H1 (cell line): ENCODE measurements at regions of chr16 and their contacts with region 1.

Region 1: DNA sequence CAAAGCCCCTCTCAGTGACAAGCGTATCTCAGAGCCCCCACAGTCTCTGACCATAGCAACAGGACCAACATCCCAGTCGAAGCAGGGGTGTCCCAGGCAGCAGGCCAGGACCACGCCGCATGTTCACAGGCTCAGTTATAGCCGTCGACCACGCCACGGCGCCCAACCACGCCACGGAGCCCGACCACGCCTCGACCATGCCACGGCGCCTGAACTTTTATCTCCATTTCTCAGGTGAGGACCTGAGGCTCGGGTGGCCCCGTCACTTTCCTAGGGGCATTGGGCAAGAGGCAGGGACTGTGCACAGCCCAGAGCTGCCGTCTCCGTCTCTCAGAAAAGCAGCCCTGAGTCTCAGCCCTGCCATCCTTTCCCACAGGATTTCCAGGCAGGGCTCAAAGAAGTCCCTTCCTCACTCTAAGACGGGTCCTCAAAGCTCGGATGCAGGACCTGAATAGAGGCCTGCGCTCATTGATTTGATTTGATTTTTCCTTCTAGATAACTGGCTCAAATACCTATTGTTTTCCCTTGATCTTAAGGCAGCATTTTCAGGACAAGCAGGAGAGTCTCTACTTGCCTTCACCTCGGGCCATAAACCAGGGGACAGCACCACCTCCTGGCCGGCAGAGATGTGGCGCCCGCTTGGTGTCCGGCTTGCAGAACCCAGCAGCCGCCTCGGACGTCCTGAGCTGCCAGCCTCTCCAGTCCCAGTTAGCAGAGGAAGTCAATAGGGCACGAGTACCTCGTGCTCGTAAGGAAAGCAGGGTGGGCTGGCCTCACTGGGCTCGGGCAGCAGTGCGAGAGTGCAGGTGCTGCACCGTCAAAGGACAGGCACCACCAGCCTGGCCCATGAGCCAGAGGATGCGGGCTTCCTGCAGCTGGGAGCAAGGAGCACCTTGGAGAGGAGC is 38.7 kb downstream of the C16orf95 start:
- DNase-seq: peak; percentile 77 to 90
- H3K4me3 ChIP-seq: no peak overlapping the region
- H3K27ac ChIP-seq: no peak overlapping the region
- H3K4me1 ChIP-seq: no peaks in the 10 kb centered on the region
- H3K27me3 ChIP-seq: no peaks in the 10 kb centered on the region; a peak in 1 of 7 replicates
- CTCF ChIP-seq: peak; percentile 89 to 97 (median 97)
- EP300 ChIP-seq: no peak
- POLR2A ChIP-seq: no peak
- RAD21 ChIP-seq: peak; percentile 95 to 97

Region 2: DNA sequence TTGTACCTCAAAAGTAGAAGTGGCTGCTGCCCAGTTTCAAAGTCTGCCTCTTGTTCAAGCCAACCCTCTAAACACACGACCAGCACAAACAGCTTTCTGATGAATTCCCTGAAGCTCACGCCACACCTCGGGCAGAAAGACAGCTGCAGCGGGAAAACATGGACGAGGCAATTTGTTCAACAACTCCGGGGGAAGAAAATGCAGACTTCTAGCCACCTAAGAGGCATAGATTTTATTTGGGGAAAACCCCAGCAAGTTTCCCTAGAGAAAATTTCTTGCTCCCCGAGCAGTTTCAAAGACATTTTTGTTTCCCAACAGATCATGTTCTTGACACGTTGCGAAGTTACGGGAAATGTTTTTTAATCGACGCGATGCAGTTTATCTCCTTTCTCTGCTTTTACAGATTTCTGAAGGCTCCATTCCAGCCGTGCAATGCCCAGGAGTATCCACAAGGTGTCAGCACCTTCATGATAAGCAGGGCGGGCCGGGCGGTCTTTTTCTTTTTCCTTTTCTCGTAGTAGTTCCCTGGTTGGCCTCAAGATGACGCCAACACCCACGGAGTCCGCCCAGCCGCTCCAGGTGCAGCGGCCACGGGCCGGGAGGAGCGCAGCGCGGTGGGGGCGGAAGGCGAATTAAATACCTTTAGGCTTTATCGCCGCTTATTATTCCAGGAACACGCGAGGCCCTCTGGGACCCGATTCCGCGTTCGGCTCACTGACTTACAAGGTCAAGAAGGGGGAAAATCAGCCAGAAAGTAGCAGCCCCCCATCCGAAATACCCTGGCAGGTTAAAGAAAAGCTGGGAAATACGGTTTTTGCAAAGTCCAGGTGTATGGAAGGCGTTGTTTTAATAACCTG is 714.7 kb before region 1 on chr16:
- CTCF ChIA-PET with region 1: interaction called, 10 read pairs
- POLR2A ChIA-PET with region 1: no interaction called
- DNase-seq: peak in 1 of 2 experiments; percentile 95
- H3K4me3 ChIP-seq: peak overlapping the region in 3 of 4 experiments; percentile 34 to 53 (median 43); a peak in 6 of 8 replicates
- H3K27ac ChIP-seq: no peak overlapping the region
- H3K4me1 ChIP-seq: peaks cover 3 to 16% (median 8%) of the 10 kb centered on the region in 4 experiments
- H3K27me3 ChIP-seq: peaks cover 39 to 56% (median 49%) of the 10 kb centered on the region in 4 experiments; a peak in 6 of 7 replicates
- CTCF ChIP-seq: peak; percentile 82 to 99 (median 97)
- EP300 ChIP-seq: no peak
- POLR2A ChIP-seq: no peak
- RAD21 ChIP-seq: peak; percentile 100

Region 3: DNA sequence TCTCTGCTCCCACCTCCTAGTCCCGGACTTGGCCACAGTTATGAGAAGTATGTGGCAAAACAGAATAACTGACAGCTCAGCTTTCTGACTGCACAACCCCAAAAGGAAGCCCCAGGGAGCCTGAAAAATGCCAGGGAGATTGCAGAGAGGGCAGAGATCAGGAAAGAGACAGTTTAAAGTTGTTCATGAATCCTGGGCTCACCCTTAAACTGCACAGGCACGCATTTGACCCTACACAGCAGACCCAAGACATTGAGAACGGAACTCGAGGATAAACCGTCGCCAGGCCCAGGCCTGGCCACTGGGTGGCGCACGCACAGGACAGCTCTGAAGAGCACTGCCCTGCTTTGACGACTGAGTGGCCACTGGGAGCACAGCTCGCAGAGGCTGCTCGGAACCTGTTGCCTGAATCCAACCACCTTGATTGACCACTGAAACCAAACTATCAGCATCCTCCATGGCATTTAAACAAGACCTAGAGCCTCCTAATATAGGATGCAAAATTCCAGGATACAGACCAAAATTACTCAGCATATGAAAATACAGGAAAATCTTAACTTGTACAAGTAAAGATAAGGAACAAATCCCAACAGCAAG is 75.3 kb before region 1 on chr16:
- CTCF ChIA-PET with region 1: interaction called, 21 read pairs
- POLR2A ChIA-PET with region 1: no interaction called
- DNase-seq: peak; percentile 74 to 92
- H3K4me3 ChIP-seq: no peak overlapping the region
- H3K27ac ChIP-seq: no peak overlapping the region
- H3K4me1 ChIP-seq: peaks cover 0 to 8% (median 6%) of the 10 kb centered on the region in 4 experiments; a peak in 4 of 7 replicates
- H3K27me3 ChIP-seq: no peaks in the 10 kb centered on the region; a peak in 2 of 7 replicates
- CTCF ChIP-seq: peak; percentile 98 to 100 (median 99)
- EP300 ChIP-seq: no peak
- POLR2A ChIP-seq: no peak
- RAD21 ChIP-seq: peak; percentile 78 to 85

Region 4: DNA sequence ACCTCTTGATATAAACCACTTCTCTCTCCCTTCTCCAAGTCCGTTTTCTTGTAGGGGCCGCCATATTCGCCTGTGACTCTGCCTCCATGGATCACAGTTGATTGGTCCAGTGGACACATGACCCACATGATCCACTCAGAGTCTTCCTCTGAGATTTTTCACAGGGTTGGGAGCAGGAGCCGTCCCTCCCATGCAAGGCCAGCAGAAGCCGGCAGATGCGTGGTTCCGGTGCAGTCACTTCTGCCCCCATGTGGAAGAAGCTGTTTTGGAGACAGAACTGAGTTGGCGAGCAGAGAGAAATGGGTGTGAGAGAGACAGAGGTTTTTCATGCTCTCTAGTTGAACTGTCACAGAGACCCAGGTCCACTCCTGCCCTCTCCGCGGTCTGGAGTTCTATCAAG is 44.5 kb before region 1 on chr16:
- CTCF ChIA-PET with region 1: interaction called, 16 read pairs
- POLR2A ChIA-PET with region 1: no interaction called
- DNase-seq: no peak
- H3K4me3 ChIP-seq: no peak overlapping the region
- H3K27ac ChIP-seq: no peak overlapping the region
- H3K4me1 ChIP-seq: peaks cover 0 to 4% (median 1%) of the 10 kb centered on the region in 4 experiments; a peak in 1 of 7 replicates
- H3K27me3 ChIP-seq: no peaks in the 10 kb centered on the region
- CTCF ChIP-seq: peak; percentile 53 to 63 (median 61)
- EP300 ChIP-seq: no peak
- POLR2A ChIP-seq: no peak
- RAD21 ChIP-seq: peak; percentile 59 to 69

Region 5: DNA sequence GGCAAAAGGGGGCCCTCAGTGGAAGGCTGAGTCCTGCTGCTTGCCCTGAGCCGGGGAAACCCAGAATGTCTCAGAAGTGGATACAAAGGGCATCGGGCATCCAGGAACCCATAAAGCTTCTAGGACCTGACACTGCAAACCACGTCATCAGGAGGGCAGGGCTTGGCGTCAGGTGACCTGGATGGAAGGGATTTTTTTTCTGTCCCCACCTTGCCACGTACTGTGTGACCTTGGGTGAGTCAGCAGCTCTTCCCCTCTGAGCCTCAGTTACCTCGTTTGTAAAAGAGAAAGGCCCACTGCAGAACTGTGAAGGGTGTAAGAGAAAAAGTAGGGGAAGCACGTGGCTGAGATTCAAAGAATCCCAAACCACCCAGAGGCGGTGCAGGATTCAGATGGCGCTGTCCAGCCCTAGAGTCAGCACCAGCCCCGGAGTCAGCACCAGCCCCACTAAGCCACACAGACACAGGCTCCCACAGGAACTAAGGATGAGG is 14.9 kb before region 1 on chr16:
- CTCF ChIA-PET with region 1: interaction called, 62 read pairs
- POLR2A ChIA-PET with region 1: no interaction called
- DNase-seq: no peak
- H3K4me3 ChIP-seq: no peak overlapping the region
- H3K27ac ChIP-seq: no peak overlapping the region
- H3K4me1 ChIP-seq: no peaks in the 10 kb centered on the region
- H3K27me3 ChIP-seq: no peaks in the 10 kb centered on the region
- CTCF ChIP-seq: no peak
- EP300 ChIP-seq: no peak
- POLR2A ChIP-seq: no peak
- RAD21 ChIP-seq: no peak

Region 6: GRCh38 chr16:87297918-87298631 is 19.6 kb after region 1 on chr16:
- CTCF ChIA-PET with region 1: interaction called, 15 read pairs
- POLR2A ChIA-PET with region 1: no interaction called
- DNase-seq: peak in 1 of 2 experiments; percentile 85
- H3K4me3 ChIP-seq: no peak overlapping the region
- H3K27ac ChIP-seq: no peak overlapping the region
- H3K4me1 ChIP-seq: peaks cover 0 to 5% (median 2%) of the 10 kb centered on the region in 4 experiments; a peak in 3 of 7 replicates
- H3K27me3 ChIP-seq: no peaks in the 10 kb centered on the region; a peak in 1 of 7 replicates
- CTCF ChIP-seq: peak; percentile 57 to 91 (median 83)
- EP300 ChIP-seq: no peak
- POLR2A ChIP-seq: no peak
- RAD21 ChIP-seq: peak; percentile 55 to 69

Region 7: GRCh38 chr16:87350681-87351319 is 72.4 kb after region 1 on chr16:
- CTCF ChIA-PET with region 1: no interaction called
- POLR2A ChIA-PET with region 1: no interaction called
- DNase-seq: no peak
- H3K4me3 ChIP-seq: no peak overlapping the region
- H3K27ac ChIP-seq: no peak overlapping the region
- H3K4me1 ChIP-seq: peaks cover 0 to 1% (median 0%) of the 10 kb centered on the region in 4 experiments; a peak in 1 of 7 replicates
- H3K27me3 ChIP-seq: no peaks in the 10 kb centered on the region
- CTCF ChIP-seq: no peak
- EP300 ChIP-seq: no peak
- POLR2A ChIP-seq: no peak
- RAD21 ChIP-seq: no peak